HepG2 (cell line): ENCODE measurements at regions of chr2 and their contacts with region 1.

Region 1: DNA sequence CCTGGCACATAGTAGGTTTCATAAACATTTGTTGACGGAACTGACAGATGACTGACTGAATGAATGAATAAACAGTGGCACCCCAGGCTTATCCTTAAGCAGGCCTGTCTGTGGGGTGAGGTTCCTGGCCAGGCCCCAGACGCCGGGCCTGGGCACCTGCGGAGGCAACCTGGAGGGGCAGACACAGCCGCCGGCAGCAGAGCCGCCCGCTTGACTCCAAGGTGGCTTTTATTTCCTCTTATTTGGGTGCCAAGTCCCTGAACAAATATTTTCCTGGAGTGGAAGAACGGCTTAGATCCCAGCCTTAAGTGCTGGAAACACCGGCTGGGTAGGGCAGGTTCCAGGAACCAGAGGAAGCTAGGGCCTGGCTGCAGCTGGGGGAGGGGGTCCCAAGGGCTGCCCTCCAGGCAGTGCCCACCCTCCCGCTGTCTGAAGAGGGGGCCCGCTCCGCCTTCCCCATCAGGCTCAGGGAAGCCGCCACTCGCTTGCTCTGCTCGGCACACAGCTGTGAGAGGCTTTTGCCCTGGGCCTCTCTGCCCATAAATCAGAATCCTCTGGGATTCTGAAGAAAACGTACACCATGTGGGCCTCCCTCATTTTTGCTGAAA is 28.3 kb downstream of the SDC1 start:
- DNase-seq: no peak
- ATAC-seq: no peak
- H3K4me3 ChIP-seq: 0 out of 6 replicates have a peak overlapping the region, but pooled peaks of 1 of the 3 experiments have one; percentile 4
- H3K27ac ChIP-seq: peak overlapping the region; percentile 73
- H3K4me1 ChIP-seq: peaks cover 77% of the 10 kb centered on the region
- H3K27me3 ChIP-seq: no peaks in the 10 kb centered on the region
- CTCF ChIP-seq: no peak
- EP300 ChIP-seq: no peak
- POLR2A ChIP-seq: no peak
- RAD21 ChIP-seq: no peak

Region 2: DNA sequence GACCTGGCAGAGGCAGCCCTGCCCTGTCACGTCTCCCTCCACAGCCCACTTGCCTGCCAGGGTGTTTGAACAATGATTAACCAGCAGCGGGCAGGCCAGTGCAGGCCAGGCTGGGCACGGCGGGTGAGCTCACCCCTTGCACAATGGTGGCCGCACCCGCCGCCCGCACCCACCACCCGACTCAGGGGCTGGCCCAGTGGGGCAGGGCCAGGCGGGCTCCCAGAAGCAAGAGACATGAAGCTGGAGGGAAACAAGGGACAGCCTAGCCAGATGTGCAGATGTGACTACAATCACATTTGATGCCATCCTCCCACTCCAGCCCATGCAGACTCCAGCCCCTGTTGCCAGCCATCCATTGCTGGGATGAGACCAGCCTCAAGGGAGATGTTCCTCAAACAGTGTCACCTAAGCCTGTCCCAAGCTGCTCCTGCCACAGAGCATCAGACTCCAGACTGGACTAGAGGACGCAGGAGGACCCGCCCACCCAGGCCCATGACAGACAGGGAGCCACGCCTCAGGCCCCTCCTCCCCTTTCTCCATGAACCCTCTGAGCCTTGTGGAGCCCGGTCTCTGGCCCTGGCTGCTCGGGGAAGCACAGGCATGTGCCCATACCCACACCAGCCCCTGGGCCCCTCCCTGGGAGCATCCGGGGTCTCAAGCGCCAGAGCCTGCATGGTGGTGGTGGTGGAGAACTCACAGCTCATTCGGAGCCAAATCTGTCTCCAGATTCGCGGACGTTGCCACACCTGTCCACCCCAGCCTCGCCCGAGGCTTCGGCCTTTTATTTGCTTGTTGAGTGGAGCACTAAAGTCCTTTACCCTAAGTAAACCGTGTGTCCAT is 16.7 kb before region 1 on chr2:
- CTCF ChIA-PET with region 1: no interaction called
- POLR2A ChIA-PET with region 1: interaction called, 23 read pairs
- in situ Hi-C with region 1: no loop called
- intact Hi-C with region 1: no loop called
- DNase-seq: peak; percentile 88
- ATAC-seq: peak; percentile 84
- H3K4me3 ChIP-seq: peak overlapping the region; percentile 47 to 73 (median 53)
- H3K27ac ChIP-seq: peak overlapping the region; percentile 60
- H3K4me1 ChIP-seq: peaks cover 76% of the 10 kb centered on the region
- H3K27me3 ChIP-seq: no peaks in the 10 kb centered on the region
- CTCF ChIP-seq: peak; percentile 63
- EP300 ChIP-seq: peak; percentile 14 to 25; a peak in 1 of 4 replicates
- POLR2A ChIP-seq: peak in 1 of 2 experiments; percentile 35; a peak in 2 of 4 replicates
- RAD21 ChIP-seq: peak; percentile 64; the same call in 1 of the 2 replicates

Region 3: GRCh38 chr2:20207051-20207450 is 10.4 kb after region 1 on chr2:
- CTCF ChIA-PET with region 1: no interaction called
- POLR2A ChIA-PET with region 1: interaction called, 18 read pairs
- in situ Hi-C with region 1: no loop called
- intact Hi-C with region 1: loop called (anchors 2 kb)
- DNase-seq: no peak
- ATAC-seq: peak; percentile 1; the same call in 2 of the 3 replicates
- H3K4me3 ChIP-seq: no peak overlapping the region
- H3K27ac ChIP-seq: peak overlapping the region; percentile 70
- H3K4me1 ChIP-seq: peaks cover 73% of the 10 kb centered on the region
- H3K27me3 ChIP-seq: no peaks in the 10 kb centered on the region
- CTCF ChIP-seq: no peak
- EP300 ChIP-seq: peak in 1 of 2 experiments; percentile 20; a peak in 1 of 4 replicates
- POLR2A ChIP-seq: no peak
- RAD21 ChIP-seq: no peak

Region 4: GRCh38 chr2:20212459-20212870 is 15.8 kb after region 1 on chr2:
- CTCF ChIA-PET with region 1: no interaction called
- POLR2A ChIA-PET with region 1: interaction called, 18 read pairs
- in situ Hi-C with region 1: no loop called
- intact Hi-C with region 1: loop called (anchors 2 kb)
- DNase-seq: no peak
- ATAC-seq: peak; percentile 0; the same call in 1 of the 3 replicates
- H3K4me3 ChIP-seq: peak overlapping the region in 1 of 3 experiments; percentile 39; a peak in 1 of 6 replicates
- H3K27ac ChIP-seq: peak overlapping the region; percentile 83
- H3K4me1 ChIP-seq: peaks cover 100% of the 10 kb centered on the region
- H3K27me3 ChIP-seq: no peaks in the 10 kb centered on the region
- CTCF ChIP-seq: no peak
- EP300 ChIP-seq: no peak
- POLR2A ChIP-seq: no peak
- RAD21 ChIP-seq: no peak